HCT116 (cell line): ENCODE measurements at regions of chr12 and their contacts with region 1.

Region 1: DNA sequence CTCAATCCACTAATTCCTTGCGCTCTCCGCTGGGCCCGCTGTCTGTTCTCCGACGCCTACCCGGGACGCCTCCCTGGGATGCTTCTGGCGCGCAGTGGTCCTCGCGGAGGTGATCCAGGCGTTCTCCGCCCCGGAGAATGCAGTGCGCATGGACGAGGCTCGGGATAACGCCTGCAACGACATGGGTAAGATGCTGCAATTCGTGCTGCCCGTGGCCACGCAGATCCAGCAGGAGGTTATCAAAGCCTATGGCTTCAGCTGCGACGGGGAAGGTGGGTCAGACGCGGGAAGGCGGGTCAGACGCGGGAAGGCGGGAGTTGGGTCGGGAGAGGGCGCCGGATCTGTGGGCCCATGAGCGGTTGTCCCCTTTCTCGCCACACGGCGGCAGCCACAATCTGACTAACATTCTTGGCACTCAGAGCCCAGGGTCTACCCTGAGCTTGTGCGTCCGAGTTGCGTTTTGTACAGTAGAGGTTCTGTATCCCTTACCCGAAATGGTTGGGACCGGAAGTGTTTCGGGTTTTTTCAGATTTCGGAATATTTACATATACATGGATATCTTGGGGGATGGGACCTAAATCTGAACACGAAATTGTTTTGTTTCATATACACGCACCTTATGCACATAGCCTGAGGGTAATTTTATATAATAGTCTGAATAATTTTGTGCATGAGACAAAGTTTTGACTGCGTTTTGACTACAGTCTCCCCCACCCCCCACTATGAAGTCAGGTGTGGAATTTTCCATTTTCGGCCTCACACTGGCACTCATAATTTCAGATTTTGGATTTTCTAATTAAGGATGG is 762 bp downstream of the C12orf57 start:
- DNase-seq: peak; percentile 89
- ATAC-seq: peak; percentile 39
- H3K4me3 ChIP-seq: peak overlapping the region; percentile 68 to 71
- H3K27ac ChIP-seq: peak overlapping the region; percentile 99
- H3K4me1 ChIP-seq: peaks cover 22 to 66% of the 10 kb centered on the region in 2 experiments
- H3K27me3 ChIP-seq: no peaks in the 10 kb centered on the region
- CTCF ChIP-seq: peak in 2 of 3 experiments; percentile 76 to 77; a peak in 4 of 6 replicates
- POLR2A ChIP-seq: no peak
- RAD21 ChIP-seq: no peak

Region 2: GRCh38 chr12:6851921-6852650 is 92.5 kb before region 1 on chr12 and contains the start of gene USP5:
- CTCF ChIA-PET with region 1: no interaction called
- POLR2A ChIA-PET with region 1: interaction called, 28 read pairs
- RAD21 ChIA-PET with region 1: no interaction called
- intact Hi-C with region 1: no loop called
- DNase-seq: peak; percentile 100
- ATAC-seq: peak; percentile 81
- H3K4me3 ChIP-seq: peak within 1 kb of the TSS; percentile 67 to 94
- H3K27ac ChIP-seq: peak within 1 kb of the TSS; percentile 77
- H3K4me1 ChIP-seq: peaks cover 15 to 31% of the 10 kb centered on the region in 2 experiments
- H3K27me3 ChIP-seq: no peaks in the 10 kb centered on the region
- CTCF ChIP-seq: no peak
- POLR2A ChIP-seq: no peak
- RAD21 ChIP-seq: no peak
- total RNA-seq, gene USP5: 175 TPM

Region 3: DNA sequence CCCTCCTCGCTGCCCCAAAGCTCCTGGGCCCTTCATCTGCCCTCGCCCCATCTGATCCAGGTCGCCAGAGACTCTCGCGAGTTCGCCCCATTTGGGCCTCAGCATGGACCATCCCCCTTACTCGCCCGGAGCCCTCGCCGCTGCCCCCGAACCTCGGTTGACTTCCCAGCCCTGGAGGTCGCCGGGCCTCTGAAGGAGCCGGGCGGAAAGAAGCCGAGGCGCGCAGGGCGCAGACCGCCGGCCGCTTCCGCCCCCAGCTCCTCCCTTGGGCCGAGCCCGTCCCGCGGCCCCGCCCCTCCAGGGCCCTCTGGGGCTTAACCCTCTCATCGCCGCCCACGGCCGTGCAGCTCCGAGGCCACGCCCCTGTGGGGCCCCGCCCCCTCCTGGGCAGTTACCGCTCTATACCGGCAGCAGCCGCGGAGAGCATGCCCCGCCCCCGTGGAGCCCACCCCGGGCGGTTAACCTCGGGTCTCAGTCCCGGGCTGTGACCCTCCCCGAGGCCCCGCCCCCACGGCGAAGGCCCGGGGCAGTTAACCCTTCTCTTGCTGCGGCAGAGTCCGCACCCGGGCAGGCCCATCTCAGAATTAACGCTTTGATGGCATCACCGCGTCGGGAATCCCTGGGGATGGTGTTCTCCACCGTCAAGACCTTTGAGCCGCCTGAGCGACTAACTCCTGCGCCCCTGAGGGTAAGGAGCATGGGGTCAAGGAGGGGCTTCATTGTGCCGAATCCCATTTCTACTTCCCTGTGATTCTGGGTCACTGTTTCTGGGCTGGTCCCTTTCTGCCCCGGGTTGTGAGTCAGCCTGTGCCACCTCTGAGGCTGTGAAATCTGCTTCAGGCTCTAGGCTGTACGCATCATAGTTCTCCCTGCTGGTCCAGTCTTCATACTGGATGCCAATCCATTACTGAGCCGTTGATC is 71.2 kb before region 1 on chr12 and contains the start of gene SPSB2:
- CTCF ChIA-PET with region 1: interaction called, 10 read pairs
- POLR2A ChIA-PET with region 1: interaction called, 106 read pairs
- RAD21 ChIA-PET with region 1: interaction called, 4 to 5 read pairs
- intact Hi-C with region 1: loop called (anchors 1 kb)
- DNase-seq: peak; percentile 89
- ATAC-seq: peak; percentile 79
- H3K4me3 ChIP-seq: peak within 1 kb of the TSS; percentile 73 to 92
- H3K27ac ChIP-seq: peak within 1 kb of the TSS; percentile 96
- H3K4me1 ChIP-seq: peaks cover 23 to 50% of the 10 kb centered on the region in 2 experiments
- H3K27me3 ChIP-seq: no peaks in the 10 kb centered on the region
- CTCF ChIP-seq: no peak
- POLR2A ChIP-seq: peak; percentile 35
- RAD21 ChIP-seq: no peak
- total RNA-seq, gene SPSB2: 10.0 TPM

Region 4: GRCh38 chr12:6927379-6928024 is 17.1 kb before region 1 on chr12 and contains the start of gene ATN1:
- CTCF ChIA-PET with region 1: interaction called, 17 read pairs
- POLR2A ChIA-PET with region 1: interaction called, 96 read pairs
- RAD21 ChIA-PET with region 1: interaction called, 3 to 4 read pairs
- intact Hi-C with region 1: loop called (anchors 2 kb)
- DNase-seq: no peak
- ATAC-seq: peak; percentile 10
- H3K4me3 ChIP-seq: peak within 1 kb of the TSS; percentile 79 to 92
- H3K27ac ChIP-seq: peak within 1 kb of the TSS; percentile 99
- H3K4me1 ChIP-seq: peaks cover 25 to 53% of the 10 kb centered on the region in 2 experiments
- H3K27me3 ChIP-seq: no peaks in the 10 kb centered on the region
- CTCF ChIP-seq: no peak
- POLR2A ChIP-seq: no peak
- RAD21 ChIP-seq: no peak
- total RNA-seq, gene ATN1: 104 TPM

Region 5: DNA sequence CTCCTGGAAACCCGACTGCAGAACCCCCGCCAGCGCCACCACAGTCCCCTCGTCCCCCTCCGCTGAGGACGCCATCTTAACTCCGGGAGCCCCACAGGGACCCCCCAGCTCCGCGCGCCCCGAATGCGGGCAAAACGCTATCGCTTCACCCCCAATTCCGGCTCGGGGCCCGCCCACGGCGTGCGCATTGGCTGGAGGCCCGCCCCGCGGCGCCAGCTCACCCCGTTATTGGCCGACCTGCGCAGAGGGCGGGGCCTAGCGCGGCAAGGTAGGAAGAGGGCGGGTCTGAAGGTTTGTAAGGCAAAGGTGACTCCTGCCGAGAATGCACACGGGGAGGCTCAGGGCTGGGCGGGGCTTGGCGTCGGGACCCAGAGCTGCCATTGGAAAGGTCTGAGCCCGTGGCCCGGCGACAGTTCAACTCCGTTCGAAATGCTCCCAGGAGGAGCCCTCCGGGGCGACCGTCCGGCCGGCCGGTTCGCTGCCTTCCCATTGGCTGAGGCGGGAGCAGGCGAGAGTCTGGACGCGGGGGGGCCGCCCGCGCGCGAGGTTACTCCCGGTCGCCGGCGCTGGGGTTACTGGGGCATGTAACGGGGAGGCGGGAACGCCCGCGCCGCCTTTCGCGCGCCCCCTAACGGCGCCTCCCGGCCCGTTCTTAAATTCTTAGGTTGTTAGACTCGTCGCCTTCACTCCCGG is 73.9 kb after region 1 on chr12 and contains the start of gene LPCAT3:
- CTCF ChIA-PET with region 1: interaction called, 7 read pairs
- POLR2A ChIA-PET with region 1: interaction called, 17 read pairs
- RAD21 ChIA-PET with region 1: no interaction called
- intact Hi-C with region 1: no loop called
- DNase-seq: peak; percentile 90
- ATAC-seq: peak; percentile 92
- H3K4me3 ChIP-seq: peak within 1 kb of the TSS; percentile 89 to 96
- H3K27ac ChIP-seq: peak within 1 kb of the TSS; percentile 93
- H3K4me1 ChIP-seq: peaks cover 14 to 32% of the 10 kb centered on the region in 2 experiments
- H3K27me3 ChIP-seq: no peaks in the 10 kb centered on the region
- CTCF ChIP-seq: peak; percentile 65 to 74 (median 69)
- POLR2A ChIP-seq: no peak
- RAD21 ChIP-seq: peak; percentile 70
- total RNA-seq, gene LPCAT3: 45.8 TPM

Region 6: GRCh38 chr12:7075939-7076338 is 131.4 kb after region 1 on chr12:
- CTCF ChIA-PET with region 1: no interaction called
- POLR2A ChIA-PET with region 1: interaction called, 11 read pairs
- RAD21 ChIA-PET with region 1: no interaction called
- intact Hi-C with region 1: no loop called
- DNase-seq: no peak
- ATAC-seq: no peak
- H3K4me3 ChIP-seq: no peak overlapping the region
- H3K27ac ChIP-seq: no peak overlapping the region
- H3K4me1 ChIP-seq: peaks cover 2 to 7% of the 10 kb centered on the region in 2 experiments; a peak in 2 of 4 replicates
- H3K27me3 ChIP-seq: no peaks in the 10 kb centered on the region
- CTCF ChIP-seq: no peak
- POLR2A ChIP-seq: no peak
- RAD21 ChIP-seq: no peak

Region 7: DNA sequence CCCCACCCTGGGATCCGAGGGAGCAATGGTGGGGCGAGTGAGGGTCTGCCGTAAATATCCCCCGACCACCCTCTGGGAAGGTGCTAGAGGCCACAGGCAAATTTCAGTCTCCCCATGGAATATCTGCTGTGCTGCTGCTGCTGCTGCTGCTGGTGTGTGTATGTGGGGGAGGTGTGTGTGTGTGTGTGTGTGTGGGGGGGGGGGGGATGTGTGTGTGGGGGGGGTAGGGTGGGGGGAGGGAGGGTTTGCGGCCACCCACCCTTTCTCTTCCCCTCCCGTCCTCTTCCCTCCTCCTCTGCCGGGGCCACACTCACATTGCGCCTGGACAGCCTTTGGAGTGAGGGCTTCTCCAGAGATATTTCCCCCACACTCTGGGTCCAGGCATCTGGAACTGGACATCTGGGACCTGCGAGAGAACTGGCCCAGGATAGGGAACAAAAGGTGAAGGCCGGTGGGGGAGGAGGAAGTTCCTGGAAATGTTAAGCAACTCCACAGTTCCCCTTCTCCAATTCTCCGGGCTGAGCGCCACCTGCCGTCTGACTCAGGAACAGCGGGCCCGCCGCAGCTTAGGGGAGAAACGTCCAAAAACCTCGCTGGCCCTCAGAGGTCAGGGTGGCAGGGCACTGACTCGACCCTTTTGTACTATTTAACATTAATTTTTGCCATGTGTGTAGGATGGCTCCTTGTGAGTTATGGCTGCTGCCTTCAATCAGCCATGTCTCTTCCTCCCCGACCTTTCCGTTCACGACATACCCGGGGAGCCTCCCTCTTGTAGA is 164.4 kb after region 1 on chr12 and contains the start of gene C1RL:
- CTCF ChIA-PET with region 1: interaction called, 34 read pairs
- POLR2A ChIA-PET with region 1: interaction called, 77 read pairs
- RAD21 ChIA-PET with region 1: interaction called, 4 to 7 read pairs
- intact Hi-C with region 1: loop called (anchors 1 kb)
- DNase-seq: peak; percentile 50
- ATAC-seq: peak; percentile 69
- H3K4me3 ChIP-seq: peak within 1 kb of the TSS; percentile 85 to 86
- H3K27ac ChIP-seq: peak within 1 kb of the TSS; percentile 88
- H3K4me1 ChIP-seq: peaks cover 4 to 16% of the 10 kb centered on the region in 2 experiments; a peak in 3 of 4 replicates
- H3K27me3 ChIP-seq: no peaks in the 10 kb centered on the region
- CTCF ChIP-seq: peak; percentile 69 to 96 (median 95); a peak in 5 of 6 replicates
- POLR2A ChIP-seq: no peak
- RAD21 ChIP-seq: peak; percentile 71
- total RNA-seq, gene C1RL: 25.9 TPM